ENCODE measurements at regions of chr4 and their contacts with region 1.

Region 1: GRCh38 chr4:1693129-1693896 is 9.2 kb upstream of the FAM53A start:
- DNase-seq: peak; percentile 68
- H3K4me3 ChIP-seq: no peak overlapping the region
- H3K27ac ChIP-seq: no peak overlapping the region
- H3K4me1 ChIP-seq: no peaks in the 10 kb centered on the region
- H3K27me3 ChIP-seq: no peaks in the 10 kb centered on the region
- CTCF ChIP-seq: peak; percentile 95 to 96

Region 2: DNA sequence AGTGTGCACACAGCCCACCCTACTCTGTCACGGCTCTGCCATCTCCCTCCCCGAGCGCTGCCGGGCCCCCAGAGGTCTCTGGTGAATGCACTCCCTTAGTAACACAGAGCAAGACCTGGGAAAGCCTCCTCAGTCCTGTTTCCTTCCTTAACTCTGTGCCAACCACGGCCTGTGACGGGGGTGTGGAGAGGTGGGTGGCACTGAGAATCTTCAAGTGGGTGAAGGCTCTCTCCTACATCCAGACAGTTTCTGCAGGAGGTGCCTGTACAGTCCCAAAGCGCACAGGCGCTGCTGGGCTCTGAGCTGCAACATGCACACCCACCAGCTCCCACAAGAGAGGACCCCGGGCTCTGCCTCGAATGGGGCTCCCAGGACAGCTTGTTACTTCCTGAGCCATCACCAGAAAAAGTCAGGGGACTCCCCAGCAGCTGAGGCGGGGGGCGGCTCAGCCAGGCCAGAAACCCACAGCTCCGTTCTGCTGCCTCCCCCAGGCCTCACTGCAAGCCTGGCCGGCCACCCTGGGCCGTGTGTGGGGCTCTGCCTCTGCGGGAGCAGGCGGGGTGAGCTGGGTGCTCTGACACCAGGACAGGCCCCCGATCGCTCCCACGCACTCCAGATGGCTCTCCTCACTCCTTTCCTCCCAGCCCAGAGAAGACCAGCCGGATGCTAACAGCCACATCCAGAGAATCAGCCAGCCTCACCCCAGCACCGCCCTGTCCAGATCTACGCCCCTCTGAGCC is 38.9 kb before region 1 on chr4:
- CTCF ChIA-PET with region 1: no interaction called
- dilution Hi-C with region 1: loop called (anchors 5 kb)
- in situ Hi-C with region 1: no loop called
- intact Hi-C with region 1: no loop called
- DNase-seq: no peak
- H3K4me3 ChIP-seq: no peak overlapping the region
- H3K27ac ChIP-seq: no peak overlapping the region
- H3K4me1 ChIP-seq: no peaks in the 10 kb centered on the region
- H3K27me3 ChIP-seq: no peaks in the 10 kb centered on the region
- CTCF ChIP-seq: no peak

Region 3: DNA sequence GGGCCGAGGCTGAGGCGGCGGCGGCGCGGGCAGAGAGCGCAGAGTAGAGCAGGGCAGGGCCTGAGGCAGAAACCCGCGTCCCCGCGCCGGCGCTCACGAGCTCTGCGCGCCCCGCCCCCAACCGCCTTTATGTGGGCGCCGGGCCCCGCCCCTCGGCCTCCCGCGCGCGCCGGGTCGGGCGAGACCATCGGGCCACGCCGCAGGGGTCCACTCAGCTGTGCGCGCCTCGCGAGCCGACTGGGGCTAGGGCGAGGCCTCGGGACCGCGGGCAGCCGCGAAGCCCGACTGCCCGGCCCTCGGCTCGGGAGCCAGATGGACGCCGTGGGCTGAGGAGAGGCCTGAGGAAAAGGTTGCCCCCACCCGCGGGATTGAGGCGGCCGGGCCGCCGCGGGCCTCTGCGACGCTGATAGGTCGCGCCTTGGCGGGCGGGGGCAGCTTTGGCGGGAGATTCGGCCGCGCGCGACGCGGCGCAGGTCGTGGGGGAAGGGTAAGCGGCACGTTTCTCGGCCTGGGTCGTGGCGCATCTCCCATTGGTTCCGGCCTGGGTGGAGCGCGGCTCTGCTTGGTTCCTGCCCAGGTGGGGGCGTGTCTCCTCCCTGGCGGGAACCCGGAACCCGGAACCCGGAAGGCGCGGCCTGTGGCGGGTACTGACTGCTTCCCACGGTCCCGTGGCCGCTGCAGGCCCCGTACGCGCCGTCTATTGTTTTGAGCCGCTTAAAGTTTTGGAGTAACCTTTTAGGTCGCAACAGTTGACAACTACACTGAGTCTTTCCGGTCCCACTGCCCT is 19.1 kb after region 1 on chr4 and contains the start of gene SLBP:
- CTCF ChIA-PET with region 1: interaction called, 3 read pairs
- dilution Hi-C with region 1: no loop called
- in situ Hi-C with region 1: no loop called
- intact Hi-C with region 1: loop called (anchors 1 kb)
- DNase-seq: peak; percentile 96
- H3K4me3 ChIP-seq: peak within 1 kb of the TSS; percentile 70 to 93 (median 83)
- H3K27ac ChIP-seq: peak within 1 kb of the TSS; percentile 89
- H3K4me1 ChIP-seq: peaks cover 17% of the 10 kb centered on the region
- H3K27me3 ChIP-seq: no peaks in the 10 kb centered on the region
- CTCF ChIP-seq: no peak
- total RNA-seq, gene SLBP: 38.0 to 55.7 TPM

Region 4: DNA sequence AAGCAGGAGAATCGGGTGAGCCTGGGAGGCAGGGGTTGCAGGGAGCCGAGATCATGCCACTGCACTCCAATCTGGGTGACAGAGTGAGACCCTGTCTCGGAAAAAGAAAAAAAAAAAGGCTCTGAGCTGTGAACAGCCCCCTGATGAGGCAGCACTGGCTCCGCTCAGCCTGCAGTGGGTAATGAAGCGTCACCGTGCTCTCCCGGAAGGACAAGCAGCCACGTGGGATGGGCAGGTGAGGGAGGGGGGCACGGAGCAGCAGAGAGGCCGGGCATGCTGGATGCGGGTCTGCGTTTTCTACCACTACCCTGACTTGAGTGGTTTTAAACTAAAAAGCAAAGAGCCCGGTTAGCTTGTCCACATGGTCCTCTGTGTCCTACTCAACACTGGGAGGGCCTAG is 43.5 kb after region 1 on chr4:
- CTCF ChIA-PET with region 1: no interaction called
- dilution Hi-C with region 1: loop called (anchors 5 kb)
- in situ Hi-C with region 1: no loop called
- intact Hi-C with region 1: no loop called
- DNase-seq: no peak
- H3K4me3 ChIP-seq: no peak overlapping the region
- H3K27ac ChIP-seq: no peak overlapping the region
- H3K4me1 ChIP-seq: no peaks in the 10 kb centered on the region
- H3K27me3 ChIP-seq: no peaks in the 10 kb centered on the region
- CTCF ChIP-seq: no peak

Measured in mammary epithelial cell (primary cell).